ENCODE measurements at regions of chr2 and their contacts with region 1.

Region 1: DNA sequence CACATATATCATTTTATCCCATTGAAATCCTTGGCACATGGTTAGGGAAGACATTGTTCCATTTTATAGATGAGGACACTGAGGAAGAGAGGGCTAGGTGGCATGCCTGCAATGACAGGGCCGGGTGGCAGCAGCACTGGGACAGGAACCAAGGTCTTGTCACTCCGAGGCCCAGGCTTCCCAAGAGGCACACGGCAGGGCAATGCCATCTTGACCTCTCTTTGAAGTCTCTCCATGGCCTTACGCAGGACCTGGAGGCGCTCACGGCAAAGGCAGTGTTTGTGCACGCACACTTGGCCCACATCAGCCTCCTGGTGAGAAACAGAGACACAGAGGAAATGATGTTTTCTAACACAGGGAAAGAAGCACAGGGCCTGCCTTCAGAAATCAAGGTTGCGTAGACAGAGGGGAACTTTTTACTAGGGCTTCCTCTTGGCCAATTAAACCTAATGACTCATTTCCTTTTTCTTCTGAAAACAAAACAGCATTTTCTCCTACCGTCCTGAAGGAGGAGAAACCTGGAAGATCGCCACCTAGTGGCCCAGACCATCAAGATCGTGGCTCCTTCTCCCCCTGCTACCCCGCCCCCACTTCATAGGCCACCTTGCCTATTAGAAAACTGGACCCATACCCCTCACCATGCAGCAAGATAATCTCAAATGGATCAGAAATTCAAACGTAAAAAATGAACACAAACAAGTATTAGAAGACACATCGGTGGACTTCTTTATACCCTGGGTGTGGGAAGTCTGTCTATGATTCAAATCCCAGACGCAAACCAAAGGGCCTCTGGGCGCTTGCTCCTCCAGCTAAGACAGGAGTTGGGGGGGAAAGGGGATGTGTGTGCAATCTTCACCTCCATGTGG is 74.6 kb upstream of the SP3 start:
- DNase-seq: peak; percentile 92 to 93
- H3K4me3 ChIP-seq: no peak overlapping the region
- H3K27ac ChIP-seq: peak overlapping the region; percentile 69 to 76 (median 73)
- H3K4me1 ChIP-seq: peaks cover 4 to 19% of the 10 kb centered on the region in 2 donors
- H3K27me3 ChIP-seq: no peaks in the 10 kb centered on the region
- CTCF ChIP-seq: peak; percentile 68 to 95 (median 78)
- POLR2A ChIP-seq: no peak

Region 2: GRCh38 chr2:173644146-173644545 is 395.6 kb before region 1 on chr2:
- intact Hi-C with region 1: no loop called
- DNase-seq: no peak
- H3K4me3 ChIP-seq: no peak overlapping the region
- H3K27ac ChIP-seq: no peak overlapping the region
- H3K4me1 ChIP-seq: no peaks in the 10 kb centered on the region
- H3K27me3 ChIP-seq: no peaks in the 10 kb centered on the region
- CTCF ChIP-seq: no peak
- POLR2A ChIP-seq: no peak

Region 3: GRCh38 chr2:174341286-174341994 is 301.7 kb after region 1 on chr2:
- intact Hi-C with region 1: loop called (anchors 10 kb)
- DNase-seq: peak; percentile 83 to 85
- H3K4me3 ChIP-seq: no peak overlapping the region
- H3K27ac ChIP-seq: no peak overlapping the region
- H3K4me1 ChIP-seq: peaks cover 10 to 37% of the 10 kb centered on the region in 2 donors
- H3K27me3 ChIP-seq: peaks cover 74% of the 10 kb centered on the region
- CTCF ChIP-seq: peak; percentile 88 to 98 (median 95)
- POLR2A ChIP-seq: no peak

Region 4: DNA sequence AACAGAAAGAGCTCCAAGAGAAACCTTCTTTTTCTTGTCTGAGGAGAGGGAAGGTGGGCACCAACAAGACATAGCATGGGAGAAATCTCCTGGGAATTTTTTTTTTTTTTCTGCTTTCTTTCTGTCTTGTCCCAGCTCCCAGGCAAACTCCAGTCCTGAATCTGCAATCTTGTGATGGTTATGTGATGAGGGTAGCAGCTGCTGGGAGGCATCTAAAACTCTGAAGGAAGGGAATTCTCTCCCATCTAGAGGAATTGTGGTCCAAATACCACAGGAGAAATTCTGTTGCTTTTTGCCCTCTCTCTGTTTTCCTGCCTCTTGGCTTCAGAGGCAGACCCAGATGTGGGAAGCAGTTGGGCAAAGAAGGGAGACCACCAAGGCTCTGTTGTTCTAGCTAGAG is 372.5 kb after region 1 on chr2:
- intact Hi-C with region 1: no loop called
- DNase-seq: no peak
- H3K4me3 ChIP-seq: no peak overlapping the region
- H3K27ac ChIP-seq: no peak overlapping the region
- H3K4me1 ChIP-seq: no peaks in the 10 kb centered on the region
- H3K27me3 ChIP-seq: no peaks in the 10 kb centered on the region
- CTCF ChIP-seq: no peak
- POLR2A ChIP-seq: no peak